ENCODE measurements at regions of chr5 and their contacts with region 1.

Region 1: DNA sequence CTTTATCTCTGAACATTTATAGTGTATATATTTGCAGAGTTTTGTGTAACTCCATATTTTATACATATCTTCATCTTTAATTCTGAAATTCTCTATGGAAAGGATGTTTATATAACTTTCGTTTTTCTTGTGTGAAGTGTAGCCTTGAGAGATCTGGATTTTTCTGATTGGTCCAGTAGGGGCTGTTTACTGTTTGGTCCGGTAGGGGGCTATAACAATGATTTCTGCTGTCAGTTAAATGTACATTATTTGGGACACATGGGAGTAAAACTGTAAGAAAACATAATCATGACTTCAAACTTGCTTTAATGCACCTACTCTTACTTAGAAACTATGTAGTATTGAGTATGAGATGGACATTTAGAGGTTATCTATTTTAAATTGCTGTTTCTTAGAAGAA is 527.1 kb upstream of the ARRDC3 start:
- DNase-seq: no peak
- ATAC-seq: no peak
- H3K4me3 ChIP-seq: no peak overlapping the region
- H3K4me3 Mint-ChIP-seq: no peak overlapping the region
- H3K27ac ChIP-seq: no peak overlapping the region
- H3K27ac Mint-ChIP-seq: no peak overlapping the region
- H3K4me1 ChIP-seq: no peaks in the 10 kb centered on the region
- H3K4me1 Mint-ChIP-seq: no peaks in the 10 kb centered on the region
- H3K27me3 ChIP-seq: no peaks in the 10 kb centered on the region
- H3K27me3 Mint-ChIP-seq: no peaks in the 10 kb centered on the region

Region 2: DNA sequence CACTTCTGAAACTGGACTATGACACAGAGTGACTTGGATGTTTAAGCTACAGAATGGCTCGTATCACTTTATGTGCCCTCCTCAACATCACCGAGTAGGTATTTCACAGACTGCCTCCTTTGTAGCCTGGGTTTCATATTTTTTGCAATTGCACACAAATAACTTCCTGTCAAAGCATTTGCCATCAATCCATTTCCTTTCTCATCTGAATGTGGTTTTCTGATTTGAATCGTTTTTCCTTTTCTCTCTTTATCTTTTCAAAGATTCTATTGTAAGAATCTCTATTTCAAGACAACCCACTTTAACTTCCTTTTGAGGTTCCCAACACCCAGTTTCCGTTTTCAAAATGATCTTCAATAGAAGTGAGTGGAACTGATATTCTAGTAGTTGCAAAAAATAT is 36.6 kb after region 1 on chr5:
- CTCF ChIA-PET with region 1: interaction called in 1 of 2 experiments, 12 read pairs
- POLR2A ChIA-PET with region 1: no interaction called
- DNase-seq: no peak
- ATAC-seq: no peak
- H3K4me3 ChIP-seq: no peak overlapping the region
- H3K4me3 Mint-ChIP-seq: no peak overlapping the region
- H3K27ac ChIP-seq: no peak overlapping the region
- H3K27ac Mint-ChIP-seq: no peak overlapping the region
- H3K4me1 ChIP-seq: peaks cover 0 to 3% of the 10 kb centered on the region in 2 experiments
- H3K4me1 Mint-ChIP-seq: no peaks in the 10 kb centered on the region
- H3K27me3 ChIP-seq: no peaks in the 10 kb centered on the region
- H3K27me3 Mint-ChIP-seq: no peaks in the 10 kb centered on the region

Region 3: DNA sequence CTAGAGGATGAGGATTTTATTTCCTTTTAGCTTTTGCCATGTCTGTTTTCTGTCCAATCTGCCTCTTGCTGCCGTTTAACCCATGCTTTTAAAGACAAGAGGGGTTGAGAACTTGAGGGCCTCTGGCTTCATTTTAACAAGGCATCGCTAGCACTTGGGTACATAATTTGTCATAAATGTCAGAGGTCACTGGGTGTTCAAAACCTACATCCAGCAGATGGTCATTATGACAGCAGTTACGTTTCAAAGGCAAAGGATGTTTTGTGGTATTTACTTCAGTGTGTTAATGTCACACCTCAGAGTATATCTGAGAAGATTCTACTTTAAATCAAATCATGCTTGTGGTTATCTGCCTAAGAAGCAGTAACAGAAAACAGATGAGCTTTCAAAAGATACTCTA is 752.5 kb after region 1 on chr5:
- CTCF ChIA-PET with region 1: no interaction called
- POLR2A ChIA-PET with region 1: interaction called in 1 of 2 experiments, 11 read pairs
- DNase-seq: no peak
- ATAC-seq: no peak
- H3K4me3 ChIP-seq: no peak overlapping the region
- H3K4me3 Mint-ChIP-seq: no peak overlapping the region
- H3K27ac ChIP-seq: no peak overlapping the region
- H3K27ac Mint-ChIP-seq: no peak overlapping the region
- H3K4me1 ChIP-seq: no peaks in the 10 kb centered on the region
- H3K4me1 Mint-ChIP-seq: no peaks in the 10 kb centered on the region
- H3K27me3 ChIP-seq: no peaks in the 10 kb centered on the region
- H3K27me3 Mint-ChIP-seq: no peaks in the 10 kb centered on the region